Dorsolateral prefrontal cortex (tissue), 120 donors: ENCODE measurements at regions of chr10 and their contacts with region 1.

Region 1: DNA sequence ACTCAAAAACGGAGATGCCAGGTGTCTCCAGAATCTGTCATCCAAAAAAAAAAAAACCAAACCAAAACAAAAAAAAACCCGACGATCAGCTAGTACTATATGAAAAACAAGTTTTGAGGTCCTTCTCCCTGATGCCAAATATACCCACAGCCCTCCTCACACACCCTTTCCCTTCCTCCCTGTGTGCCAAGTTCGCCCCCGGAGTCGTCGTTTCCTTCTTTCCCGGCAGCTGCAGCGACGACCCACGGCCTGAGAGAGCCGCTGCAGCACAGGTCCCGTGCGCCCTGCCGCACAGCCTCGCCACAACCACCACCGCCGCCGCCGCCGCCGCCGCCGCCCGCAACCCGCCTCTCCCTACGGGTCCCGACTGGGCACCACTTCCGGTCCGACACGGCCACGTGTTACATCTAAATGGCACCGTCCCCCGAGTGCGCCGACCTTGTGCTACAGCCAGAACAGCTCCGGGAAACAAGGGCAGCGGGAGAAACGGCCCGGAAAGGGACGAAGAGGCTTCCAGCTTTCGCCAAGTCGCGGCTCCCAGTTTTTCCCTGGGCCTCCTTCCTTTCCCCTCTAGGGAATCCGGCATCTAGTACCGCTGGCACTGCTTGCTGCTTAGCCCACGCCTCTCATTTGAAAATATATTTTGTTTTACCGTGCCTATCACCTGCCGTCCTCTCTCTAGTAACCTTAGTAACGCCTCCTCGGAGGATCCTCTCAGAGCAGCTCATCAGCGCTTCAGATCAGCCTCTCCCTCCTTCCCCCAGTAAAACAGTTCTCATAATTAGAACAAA is at the start of gene FRA10AC1:
- DNase-seq: peak; percentile 83 to 93 (median 90)
- H3K4me3 ChIP-seq: peak within 1 kb of the TSS; percentile 50 to 92 (median 75)
- H3K27ac ChIP-seq: peak within 1 kb of the TSS; percentile 63 to 99 (median 94)
- H3K27me3 ChIP-seq: no peaks in the 10 kb centered on the region
- CTCF ChIP-seq: peak in 54 of 56 donors; percentile 28 to 77 (median 60)
- total RNA-seq, gene FRA10AC1: 12.5 to 64.1 (median 31.2) TPM

Region 2: DNA sequence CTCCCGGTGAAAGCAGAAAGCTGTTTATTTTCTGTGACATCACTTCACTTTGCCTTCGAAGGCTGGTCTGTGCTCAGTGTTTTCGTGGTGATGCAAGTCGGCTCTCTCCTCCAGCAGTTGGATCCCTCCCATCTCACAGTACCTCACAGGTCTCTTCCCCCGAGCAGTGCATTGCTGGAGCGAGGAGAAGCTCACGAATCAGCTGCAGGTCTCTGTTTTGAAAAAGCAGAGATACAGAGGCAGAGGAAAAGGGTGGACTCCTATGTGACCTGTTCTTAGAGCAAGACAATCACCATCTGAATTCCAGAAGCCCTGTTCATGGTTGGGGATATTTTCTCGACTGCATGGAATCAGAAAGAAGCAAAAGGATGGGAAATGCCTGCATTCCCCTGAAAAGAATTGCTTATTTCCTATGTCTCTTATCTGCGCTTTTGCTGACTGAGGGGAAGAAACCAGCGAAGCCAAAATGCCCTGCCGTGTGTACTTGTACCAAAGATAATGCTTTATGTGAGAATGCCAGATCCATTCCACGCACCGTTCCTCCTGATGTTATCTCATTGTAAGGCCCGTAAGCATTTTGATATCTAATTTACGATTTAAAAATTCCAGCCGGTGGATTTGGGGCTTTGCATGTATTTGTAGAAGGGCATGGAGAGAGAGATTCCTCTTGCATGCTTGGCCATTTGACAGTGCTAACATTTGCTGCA is 55.5 kb after region 1 on chr10 and contains the start of gene LGI1:
- intact Hi-C with region 1: loop called in 1 of 2 experiments (anchors 2 kb)
- DNase-seq: peak in 9 of 10 donors; percentile 35 to 75 (median 61)
- H3K4me3 ChIP-seq: peak within 1 kb of the TSS; percentile 3 to 73 (median 61)
- H3K27ac ChIP-seq: peak within 1 kb of the TSS in 58 of 59 donors; percentile 37 to 96 (median 86)
- H3K27me3 ChIP-seq: peaks cover 0 to 26% (median 0%) of the 10 kb centered on the region in 45 donors
- CTCF ChIP-seq: no peak
- total RNA-seq, gene LGI1: 38.7 to 130 (median 85.4) TPM

Region 3: GRCh38 chr10:93816123-93816747 is 113.8 kb after region 1 on chr10:
- intact Hi-C with region 1: loop called (anchors 2 kb)
- DNase-seq: peak; percentile 39 to 76 (median 66)
- H3K4me3 ChIP-seq: peak overlapping the region in 51 of 59 donors; percentile 0 to 54 (median 32)
- H3K27ac ChIP-seq: peak overlapping the region in 8 of 59 donors; percentile 13 to 48 (median 18)
- H3K27me3 ChIP-seq: peaks cover 0 to 12% (median 0%) of the 10 kb centered on the region in 45 donors
- CTCF ChIP-seq: peak; percentile 46 to 78 (median 67)

Region 4: DNA sequence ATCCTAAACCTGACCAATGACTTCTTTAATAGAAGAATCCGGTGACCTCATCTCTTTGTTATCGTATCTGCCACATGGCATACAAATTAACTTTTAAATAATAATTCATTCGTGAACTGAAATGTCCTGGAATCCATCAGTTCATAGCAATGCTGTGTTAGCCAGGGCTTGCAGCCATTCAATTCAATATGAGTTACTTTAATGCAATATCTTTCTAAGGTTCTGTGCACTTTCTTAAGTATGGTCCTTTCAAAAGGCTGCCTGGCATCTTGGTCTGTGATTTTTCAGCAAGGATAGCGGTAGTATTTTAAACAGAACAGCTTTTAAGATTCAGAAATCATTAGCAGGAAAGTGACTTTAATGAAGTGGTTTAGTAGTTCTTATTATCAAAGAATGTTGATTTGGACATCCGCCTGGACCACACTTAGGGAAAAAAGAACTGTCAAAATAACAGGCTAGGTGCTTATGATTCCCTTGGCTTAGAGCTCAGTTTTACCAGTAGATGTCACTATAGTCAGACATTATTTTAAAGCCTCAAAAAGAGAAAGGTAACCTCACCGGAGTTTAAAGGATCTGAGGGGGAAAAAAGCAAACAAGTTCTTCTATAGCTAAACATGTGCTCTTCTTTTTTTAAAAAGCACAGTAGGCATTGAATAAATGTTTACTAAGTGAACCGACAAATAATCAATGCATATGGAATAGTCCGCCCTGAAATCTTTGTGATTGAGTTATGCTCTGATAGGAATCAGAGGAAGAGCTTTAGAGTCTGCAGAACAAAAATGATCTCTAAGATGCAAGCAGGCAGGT is 214.1 kb after region 1 on chr10:
- intact Hi-C with region 1: no loop called
- DNase-seq: no peak
- H3K4me3 ChIP-seq: peak overlapping the region in 12 of 59 donors; percentile 7 to 41 (median 30)
- H3K27ac ChIP-seq: no peak overlapping the region
- H3K27me3 ChIP-seq: no peaks in the 10 kb centered on the region
- CTCF ChIP-seq: peak; percentile 27 to 78 (median 58)